Left lung (tissue), 14 donors: ENCODE measurements at regions of chr9 and their contacts with region 1.

Region 1: GRCh38 chr9:70413798-70414775 is at the start of gene KLF9:
- DNase-seq: peak; percentile 90 to 95 (median 94)
- ATAC-seq: peak; percentile 71
- H3K4me3 ChIP-seq: peak within 1 kb of the TSS; percentile 64 to 81
- H3K27ac ChIP-seq: peak within 1 kb of the TSS; percentile 100
- H3K4me1 ChIP-seq: peaks cover 31 to 72% of the 10 kb centered on the region in 2 donors
- H3K27me3 ChIP-seq: no peaks in the 10 kb centered on the region
- CTCF ChIP-seq: no peak
- polyA plus RNA-seq, gene KLF9: 2.7 to 6.6 (median 3.0) TPM

Region 2: DNA sequence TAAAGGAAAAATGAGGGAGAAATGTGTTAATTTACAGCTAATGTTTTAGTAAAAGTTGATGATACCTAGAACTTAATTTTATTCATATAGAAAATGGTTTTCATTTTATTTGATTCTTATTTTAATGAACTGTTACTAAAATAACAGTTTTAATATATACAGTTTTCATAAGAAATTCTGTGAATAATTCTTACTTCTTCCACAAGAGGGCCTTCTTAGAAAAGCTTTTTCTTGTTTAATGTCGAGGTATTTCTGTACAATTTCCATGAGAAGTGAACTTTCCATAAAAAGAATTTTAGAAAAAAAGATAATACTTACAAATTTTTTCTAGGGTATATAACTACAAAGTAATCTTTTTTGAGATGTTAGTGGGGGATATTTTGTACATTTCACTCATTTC is 73.5 kb before region 1 on chr9:
- intact Hi-C with region 1: no loop called
- DNase-seq: peak in 1 of 4 donors; percentile 24
- ATAC-seq: peak; percentile 33
- H3K4me3 ChIP-seq: no peak overlapping the region
- H3K27ac ChIP-seq: no peak overlapping the region
- H3K4me1 ChIP-seq: no peaks in the 10 kb centered on the region
- H3K27me3 ChIP-seq: no peaks in the 10 kb centered on the region
- CTCF ChIP-seq: peak; percentile 13 to 36

Region 3: GRCh38 chr9:70542311-70542931 is 128.3 kb after region 1 on chr9:
- intact Hi-C with region 1: no loop called
- DNase-seq: no peak
- ATAC-seq: no peak
- H3K4me3 ChIP-seq: no peak overlapping the region
- H3K27ac ChIP-seq: no peak overlapping the region
- H3K4me1 ChIP-seq: no peaks in the 10 kb centered on the region
- H3K27me3 ChIP-seq: no peaks in the 10 kb centered on the region
- CTCF ChIP-seq: no peak

Region 4: DNA sequence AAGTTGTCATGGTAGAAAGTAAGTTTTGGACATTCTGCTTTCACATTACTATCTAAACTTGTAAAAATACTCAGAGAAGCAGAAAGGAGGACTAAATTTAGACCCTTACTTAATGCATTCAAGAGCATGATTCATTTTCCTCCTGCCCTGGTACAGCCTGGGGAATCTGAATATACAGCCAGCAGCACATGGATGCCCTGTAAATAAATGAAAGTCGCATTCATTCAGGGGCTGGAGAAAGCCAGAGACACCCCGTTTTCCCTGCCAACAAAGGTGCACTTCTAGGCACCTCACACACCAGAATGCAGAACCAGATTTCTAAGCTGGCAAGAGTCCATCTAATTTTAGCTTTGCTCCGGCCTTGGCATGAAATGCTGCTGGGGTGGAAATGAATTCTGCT is 173.1 kb after region 1 on chr9:
- intact Hi-C with region 1: loop called (anchors 10 kb)
- DNase-seq: no peak
- ATAC-seq: peak; percentile 72
- H3K4me3 ChIP-seq: no peak overlapping the region
- H3K27ac ChIP-seq: peak overlapping the region; percentile 9 to 70
- H3K4me1 ChIP-seq: no peaks in the 10 kb centered on the region
- H3K27me3 ChIP-seq: no peaks in the 10 kb centered on the region
- CTCF ChIP-seq: no peak

Region 5: DNA sequence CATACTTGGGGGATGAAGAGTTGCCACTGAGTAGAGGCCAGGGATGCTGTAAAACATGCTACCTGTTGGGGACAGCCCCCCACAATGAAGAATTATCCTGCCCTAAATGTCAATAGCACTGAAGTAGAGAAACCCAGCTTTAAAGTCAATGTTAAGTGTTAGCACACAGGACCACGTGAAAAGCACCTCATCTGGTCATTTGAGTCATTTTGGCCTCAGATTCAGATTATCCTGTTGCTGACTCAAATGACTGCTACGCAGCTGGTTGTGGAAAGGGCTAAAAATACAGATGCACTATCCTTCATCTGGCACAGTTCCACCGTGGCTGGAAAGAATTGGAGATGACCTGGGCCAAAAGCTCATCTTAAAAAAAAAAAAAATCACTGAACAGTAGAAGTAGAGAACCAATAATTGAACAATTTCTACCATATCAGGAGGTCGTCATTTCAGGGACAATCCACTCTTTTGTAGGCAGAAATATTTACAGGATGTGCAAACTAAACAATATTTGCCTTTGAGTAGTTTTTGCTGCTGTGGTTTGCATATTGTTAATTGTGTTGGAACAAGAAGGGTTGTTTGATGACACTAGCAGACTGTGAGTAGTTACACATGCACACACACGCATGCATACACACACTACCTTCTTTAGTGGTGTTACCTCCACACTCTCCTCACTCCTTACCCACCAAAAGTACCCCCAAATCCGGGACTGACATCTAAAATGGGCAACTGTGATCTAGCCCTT is 195.6 kb after region 1 on chr9:
- intact Hi-C with region 1: no loop called
- DNase-seq: peak in 2 of 4 donors; percentile 41 to 43
- ATAC-seq: peak; percentile 41
- H3K4me3 ChIP-seq: no peak overlapping the region
- H3K27ac ChIP-seq: no peak overlapping the region
- H3K4me1 ChIP-seq: peaks cover 0 to 10% of the 10 kb centered on the region in 2 donors
- H3K27me3 ChIP-seq: no peaks in the 10 kb centered on the region
- CTCF ChIP-seq: no peak

Region 6: GRCh38 chr9:70679845-70680244 is 265.8 kb after region 1 on chr9:
- intact Hi-C with region 1: no loop called
- DNase-seq: no peak
- ATAC-seq: no peak
- H3K4me3 ChIP-seq: no peak overlapping the region
- H3K27ac ChIP-seq: no peak overlapping the region
- H3K4me1 ChIP-seq: no peaks in the 10 kb centered on the region
- H3K27me3 ChIP-seq: no peaks in the 10 kb centered on the region
- CTCF ChIP-seq: no peak